PC-3 (cell line): ENCODE measurements at regions of chr17 and their contacts with region 1.

Region 1: GRCh38 chr17:4420692-4421131 is 13.0 kb upstream of the SPNS3 start:
- DNase-seq: peak; percentile 74
- ATAC-seq: peak; percentile 81
- H3K4me3 ChIP-seq: 0 out of 2 replicates have a peak overlapping the region, but pooled peaks have one; percentile 42
- H3K27ac ChIP-seq: no peak overlapping the region
- H3K4me1 ChIP-seq: no peaks in the 10 kb centered on the region
- H3K27me3 ChIP-seq: no peaks in the 10 kb centered on the region
- CTCF ChIP-seq: peak; percentile 74

Region 2: GRCh38 chr17:4498461-4499397 is 78.0 kb after region 1 on chr17 and contains the start of gene SPNS2:
- CTCF ChIA-PET with region 1: no interaction called
- POLR2A ChIA-PET with region 1: no interaction called
- intact Hi-C with region 1: loop called (anchors 10 kb)
- DNase-seq: peak; percentile 48
- ATAC-seq: peak; percentile 55
- H3K4me3 ChIP-seq: peak within 1 kb of the TSS; percentile 57
- H3K27ac ChIP-seq: no peak within 1 kb of the TSS
- H3K4me1 ChIP-seq: peaks cover 23% of the 10 kb centered on the region
- H3K27me3 ChIP-seq: peaks cover 12% of the 10 kb centered on the region; the same call in 1 of the 2 replicates
- CTCF ChIP-seq: no peak
- total RNA-seq, gene SPNS2: 2.6 and 7.9 TPM in 2 replicates

Region 3: DNA sequence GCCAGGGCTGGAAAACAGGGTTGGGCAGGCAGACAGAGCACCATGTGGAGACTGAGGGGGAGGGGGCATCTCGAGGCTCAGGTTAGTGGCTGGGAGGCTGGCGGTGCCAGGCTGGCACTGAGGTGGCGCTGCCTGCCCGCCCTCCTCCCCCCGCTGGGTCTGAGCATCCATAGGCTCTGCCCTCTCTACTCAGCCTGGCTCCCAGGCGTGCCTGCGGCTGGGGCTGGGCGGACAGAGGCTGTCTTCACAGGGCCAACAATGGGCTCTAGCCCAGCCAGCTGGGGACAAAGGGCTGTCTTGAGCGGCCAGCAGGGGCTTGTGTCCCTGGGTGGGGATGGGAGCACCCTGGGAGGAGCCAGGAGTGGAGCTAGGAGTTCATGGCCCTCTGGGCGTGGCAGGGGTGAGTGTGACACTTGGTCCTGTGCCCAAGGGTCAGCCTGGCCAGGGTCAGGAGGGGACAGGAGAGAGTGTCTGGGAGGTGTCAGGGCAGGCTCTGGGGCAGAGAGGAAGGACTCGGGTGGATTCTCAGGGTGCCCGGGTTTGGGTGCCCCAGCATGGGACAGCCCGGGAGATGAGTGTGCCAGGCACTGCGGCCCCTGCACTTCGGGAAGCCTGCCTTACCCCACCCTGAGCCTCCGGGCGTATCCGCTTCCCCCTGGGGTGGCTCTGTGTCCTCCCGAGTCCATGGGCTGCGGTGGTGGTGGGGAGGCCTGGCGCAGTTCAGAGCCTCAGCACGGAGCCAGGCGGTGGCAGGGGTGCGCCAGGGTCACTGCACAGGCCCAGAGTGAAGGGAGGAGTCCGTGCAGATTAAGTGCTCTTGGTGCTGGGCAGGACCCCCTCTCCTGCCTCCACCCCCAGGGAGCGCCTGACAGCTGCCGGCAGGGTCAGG is 113.6 kb after region 1 on chr17:
- CTCF ChIA-PET with region 1: no interaction called
- POLR2A ChIA-PET with region 1: no interaction called
- intact Hi-C with region 1: loop called (anchors 10 kb)
- DNase-seq: peak; percentile 50
- ATAC-seq: peak; percentile 60
- H3K4me3 ChIP-seq: no peak overlapping the region
- H3K27ac ChIP-seq: no peak overlapping the region
- H3K4me1 ChIP-seq: peaks cover 8% of the 10 kb centered on the region; the same call in 1 of the 2 replicates
- H3K27me3 ChIP-seq: no peaks in the 10 kb centered on the region
- CTCF ChIP-seq: no peak

Region 4: DNA sequence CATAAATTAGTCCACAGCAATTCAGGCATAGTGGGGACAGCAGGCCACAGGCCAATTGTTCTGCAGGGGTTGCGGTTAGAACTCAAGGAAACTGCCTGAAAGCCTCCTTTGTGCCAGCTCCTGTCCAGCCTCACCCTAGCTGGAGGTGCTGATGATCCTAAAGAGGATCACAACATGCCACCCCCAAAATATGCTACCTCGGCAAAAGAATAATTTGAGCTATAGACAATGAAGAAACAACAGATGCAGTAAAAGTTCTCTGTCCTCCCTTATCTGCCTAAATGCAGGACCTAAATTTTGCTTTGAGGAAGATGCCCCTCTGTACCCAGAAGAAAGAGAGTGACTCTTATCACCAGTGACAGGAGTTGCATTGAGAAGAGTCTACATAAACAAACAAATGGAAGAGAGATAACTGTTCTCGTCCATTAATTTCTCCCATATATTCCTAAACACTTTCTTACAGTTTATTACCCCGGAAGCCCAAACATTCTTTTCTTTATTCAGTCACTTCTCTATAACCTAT is 206.1 kb after region 1 on chr17:
- CTCF ChIA-PET with region 1: no interaction called
- POLR2A ChIA-PET with region 1: no interaction called
- intact Hi-C with region 1: loop called (anchors 2 kb)
- DNase-seq: no peak
- ATAC-seq: no peak
- H3K4me3 ChIP-seq: no peak overlapping the region
- H3K27ac ChIP-seq: no peak overlapping the region
- H3K4me1 ChIP-seq: no peaks in the 10 kb centered on the region; the same call in 1 of the 2 replicates
- H3K27me3 ChIP-seq: no peaks in the 10 kb centered on the region
- CTCF ChIP-seq: no peak